Esophagus muscularis mucosa (tissue), 4 donors: ENCODE measurements at regions of chr7 and their contacts with region 1.

Region 1: GRCh38 chr7:128904381-128905197 is 5.9 kb downstream of the KCP start:
- DNase-seq: no peak
- H3K4me3 ChIP-seq: no peak overlapping the region
- H3K27ac ChIP-seq: no peak overlapping the region
- H3K4me1 ChIP-seq: peaks cover 0 to 10% (median 5%) of the 10 kb centered on the region in 4 donors
- H3K27me3 ChIP-seq: peaks cover 0 to 59% (median 4%) of the 10 kb centered on the region in 4 donors
- CTCF ChIP-seq: peak; percentile 48 to 58 (median 55)
- EP300 ChIP-seq: no peak
- POLR2A ChIP-seq: no peak

Region 2: DNA sequence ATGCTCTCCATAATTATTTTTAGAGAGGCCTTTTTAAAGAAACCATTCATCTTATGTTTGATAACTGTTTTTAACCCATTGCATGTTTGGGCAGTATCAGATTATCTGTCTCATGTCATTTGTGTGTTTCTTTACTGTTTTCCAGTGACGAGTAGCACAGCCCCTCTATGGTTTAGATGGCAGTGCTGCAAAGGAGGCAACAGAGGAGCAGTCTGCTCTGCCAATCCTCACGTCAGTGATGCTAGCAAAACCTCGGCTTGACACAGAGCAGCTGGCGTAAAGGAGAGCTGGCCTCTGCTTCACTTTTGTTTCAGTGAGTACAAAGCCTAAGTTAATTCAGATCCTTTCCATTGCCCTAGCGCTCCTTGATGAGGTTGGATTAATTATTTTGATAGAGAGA is 312.9 kb before region 1 on chr7:
- intact Hi-C with region 1: no loop called
- DNase-seq: no peak
- H3K4me3 ChIP-seq: no peak overlapping the region
- H3K27ac ChIP-seq: no peak overlapping the region
- H3K4me1 ChIP-seq: no peaks in the 10 kb centered on the region
- H3K27me3 ChIP-seq: no peaks in the 10 kb centered on the region
- CTCF ChIP-seq: no peak
- EP300 ChIP-seq: no peak
- POLR2A ChIP-seq: no peak

Region 3: DNA sequence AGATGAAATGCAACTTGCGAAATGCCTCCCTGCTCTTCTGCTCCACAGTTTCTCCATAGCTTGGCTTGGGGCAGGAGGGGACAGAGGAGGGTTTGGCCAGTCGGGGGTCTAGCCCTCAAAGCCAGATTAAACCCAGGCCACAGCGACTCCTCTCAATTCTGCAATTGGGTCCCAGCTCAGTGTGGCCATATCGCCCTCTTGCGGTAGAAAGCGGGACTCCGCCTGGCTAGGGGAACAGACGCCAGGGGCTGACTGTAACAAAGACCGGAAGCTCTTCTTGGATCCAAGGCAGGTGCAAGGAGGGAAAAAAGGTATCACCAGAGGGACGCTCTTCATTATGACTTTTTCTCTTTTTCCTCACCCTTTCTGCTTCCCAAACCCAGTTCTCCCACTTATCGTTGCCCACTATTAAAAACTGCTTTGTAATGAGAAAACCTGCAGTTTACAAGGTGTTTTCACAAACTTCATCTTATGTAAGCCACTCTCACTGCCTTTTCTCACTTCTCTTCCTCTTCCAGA is 187.0 kb after region 1 on chr7:
- intact Hi-C with region 1: loop called (anchors 5 kb)
- DNase-seq: peak; percentile 95
- H3K4me3 ChIP-seq: no peak overlapping the region
- H3K27ac ChIP-seq: no peak overlapping the region
- H3K4me1 ChIP-seq: peaks cover 0 to 6% (median 3%) of the 10 kb centered on the region in 4 donors
- H3K27me3 ChIP-seq: peaks cover 0 to 7% (median 0%) of the 10 kb centered on the region in 4 donors
- CTCF ChIP-seq: peak in 2 of 3 experiments; percentile 89 to 92
- EP300 ChIP-seq: no peak
- POLR2A ChIP-seq: no peak